ENCODE measurements at regions of chr1 and their contacts with region 1.

Region 1: DNA sequence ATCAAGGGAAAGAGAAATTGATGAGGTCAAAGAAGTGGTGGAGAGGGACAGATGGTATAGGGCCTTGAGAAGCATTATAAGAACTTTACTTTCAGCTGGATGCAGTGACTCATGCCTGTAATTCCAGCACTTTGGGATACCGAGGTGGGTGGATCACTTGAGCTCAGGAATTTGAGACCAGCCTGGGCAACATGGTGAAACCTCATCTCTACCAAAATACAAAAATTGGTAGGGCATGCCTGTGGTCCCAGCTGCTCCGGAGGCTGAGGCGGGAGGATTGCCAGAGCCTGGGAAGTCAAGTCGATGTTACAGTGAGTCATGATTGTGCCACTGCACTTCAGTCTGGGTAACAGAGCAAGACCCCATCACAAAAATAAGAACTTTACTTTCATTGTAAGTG is 5.7 kb downstream of the TMEM50A start:
- DNase-seq: peak in 1 of 3 donors; percentile 18
- ATAC-seq: peak in 1 of 2 donors; percentile 25
- H3K4me3 ChIP-seq: no peak overlapping the region
- H3K27ac ChIP-seq: no peak overlapping the region
- H3K4me1 ChIP-seq: no peaks in the 10 kb centered on the region
- H3K27me3 ChIP-seq: no peaks in the 10 kb centered on the region

Region 2: DNA sequence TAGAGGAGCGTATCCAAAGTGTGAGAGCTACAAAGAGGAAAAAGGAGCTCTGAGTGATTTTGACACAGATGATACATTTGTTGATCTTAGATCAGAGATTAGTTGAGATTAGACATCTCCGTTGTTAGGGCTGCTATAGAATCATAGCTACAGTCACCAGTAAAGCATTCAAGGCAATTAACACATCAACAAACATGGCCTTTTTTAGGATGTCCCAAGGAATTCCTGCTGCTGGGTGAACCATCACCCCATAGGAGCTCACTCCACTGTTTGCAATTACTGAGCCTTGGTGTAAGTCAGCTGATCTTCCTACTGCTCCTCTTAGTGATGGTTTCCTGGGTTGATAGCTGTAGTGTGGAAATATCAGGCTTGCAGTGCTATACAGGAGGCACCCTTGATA is 90.0 kb before region 1 on chr1:
- intact Hi-C with region 1: loop called in 1 of 4 experiments (anchors 10 kb)
- DNase-seq: no peak
- ATAC-seq: no peak
- H3K4me3 ChIP-seq: no peak overlapping the region
- H3K27ac ChIP-seq: no peak overlapping the region
- H3K4me1 ChIP-seq: no peaks in the 10 kb centered on the region
- H3K27me3 ChIP-seq: no peaks in the 10 kb centered on the region